CD8-positive, alpha-beta T cell (primary cell): ENCODE measurements at regions of chr16 and their contacts with region 1.

Region 1: DNA sequence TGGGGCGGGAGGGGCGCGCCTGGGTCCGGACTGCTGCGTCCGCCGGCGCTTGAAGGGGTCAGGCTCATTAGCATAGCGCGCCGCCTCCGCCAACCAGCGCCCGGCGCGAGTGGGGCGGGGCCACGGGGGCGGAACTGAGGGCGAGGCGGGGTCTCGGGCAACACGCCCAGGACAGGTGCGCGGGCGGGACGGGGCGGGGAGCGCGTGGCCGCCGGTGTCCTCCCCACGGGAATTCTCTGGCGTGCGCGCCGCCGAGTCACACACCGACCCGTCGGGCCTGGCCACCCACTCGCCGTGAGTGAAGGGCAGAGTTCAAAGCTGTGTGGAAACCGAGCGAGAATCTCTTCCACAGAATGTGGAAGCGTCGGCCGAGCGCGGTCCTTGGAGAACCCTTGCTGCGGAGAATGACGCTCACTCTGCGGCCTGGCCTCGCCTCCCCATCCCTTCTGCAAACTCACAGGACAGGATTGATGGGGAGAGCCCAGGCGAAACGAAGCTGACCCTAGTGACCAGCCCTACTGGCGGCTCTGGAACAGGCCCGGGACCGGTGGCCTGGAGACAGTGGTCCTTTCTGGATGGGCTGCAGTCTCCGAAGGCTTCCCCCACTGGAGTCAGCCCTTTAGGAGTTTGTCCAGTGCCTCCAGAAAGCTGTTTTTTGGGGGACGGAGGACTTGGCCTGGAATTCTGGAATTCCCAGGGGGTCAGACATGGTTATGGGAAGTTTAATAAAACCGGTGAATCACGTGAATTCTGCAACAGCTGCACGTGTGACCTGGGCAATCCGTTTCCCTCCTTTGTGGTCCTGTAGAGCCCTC is at the start of gene SNAI3:
- DNase-seq: peak; percentile 58 to 89 (median 85)
- ATAC-seq: peak; percentile 77
- H3K4me3 ChIP-seq: peak within 1 kb of the TSS; percentile 87 to 93
- H3K4me3 Mint-ChIP-seq: peak within 1 kb of the TSS; percentile 80
- H3K27ac ChIP-seq: peak within 1 kb of the TSS; percentile 59 to 63
- H3K27ac Mint-ChIP-seq: peak within 1 kb of the TSS; percentile 69
- H3K4me1 ChIP-seq: peaks cover 46% of the 10 kb centered on the region
- H3K4me1 Mint-ChIP-seq: peaks cover 50% of the 10 kb centered on the region
- H3K27me3 ChIP-seq: no peaks in the 10 kb centered on the region
- H3K27me3 Mint-ChIP-seq: no peaks in the 10 kb centered on the region
- CTCF ChIP-seq: no peak
- total RNA-seq, gene SNAI3: 3.1 to 3.4 TPM

Region 2: DNA sequence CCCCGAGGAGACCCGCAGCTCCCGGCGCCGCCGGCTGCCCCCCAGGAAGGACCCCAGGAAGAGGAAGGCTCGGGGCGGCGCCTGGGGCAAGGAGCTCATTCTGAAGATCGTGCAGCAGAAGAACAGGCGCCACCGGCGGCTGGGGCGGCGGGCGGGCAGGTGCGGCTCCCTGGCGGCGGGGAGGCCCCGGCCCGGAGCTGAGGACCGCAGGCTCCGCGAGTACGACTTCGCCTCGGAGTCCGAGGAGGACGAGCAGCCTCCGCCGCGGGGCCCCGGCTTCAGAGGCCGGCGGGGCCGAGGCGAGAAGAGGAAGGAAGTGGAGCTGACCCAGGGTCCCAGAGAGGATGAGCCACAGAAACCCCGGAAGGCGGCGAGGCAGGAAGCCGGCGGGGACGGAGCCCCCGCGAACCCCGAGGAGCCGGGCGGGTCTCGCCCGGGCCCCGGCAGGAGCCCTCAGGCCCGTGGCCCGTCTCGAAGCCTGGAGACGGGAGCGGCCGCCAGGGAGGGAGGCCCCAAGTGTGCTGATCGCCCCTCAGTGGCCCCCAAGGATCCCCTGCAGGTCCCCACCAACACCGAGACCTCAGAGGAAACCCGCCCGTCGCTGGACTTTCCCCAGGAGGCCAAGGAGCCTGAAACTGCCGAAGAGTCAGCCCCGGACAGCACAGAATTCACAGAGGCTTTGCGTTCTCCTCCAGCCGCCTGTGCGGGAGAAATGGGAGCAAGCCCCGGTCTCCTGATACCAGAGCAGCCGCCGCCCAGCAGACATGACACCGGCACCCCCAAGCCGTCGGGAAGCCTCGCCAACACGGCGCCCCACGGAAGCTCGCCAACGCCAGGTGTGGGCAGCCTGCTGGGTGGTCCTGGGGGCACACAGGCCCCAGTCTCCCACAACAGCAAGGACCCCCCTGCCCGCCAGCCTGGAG is 255.9 kb before region 1 on chr16:
- CTCF ChIA-PET with region 1: no interaction called
- POLR2A ChIA-PET with region 1: no interaction called
- intact Hi-C with region 1: no loop called
- DNase-seq: peak in 8 of 9 experiments; percentile 25 to 78 (median 46)
- ATAC-seq: peak; percentile 67
- H3K4me3 ChIP-seq: peak overlapping the region; percentile 54 to 55
- H3K4me3 Mint-ChIP-seq: peak overlapping the region; percentile 72
- H3K27ac ChIP-seq: peak overlapping the region; percentile 42 to 43
- H3K27ac Mint-ChIP-seq: no peak overlapping the region
- H3K4me1 ChIP-seq: peaks cover 13% of the 10 kb centered on the region
- H3K4me1 Mint-ChIP-seq: peaks cover 6% of the 10 kb centered on the region
- H3K27me3 ChIP-seq: no peaks in the 10 kb centered on the region
- H3K27me3 Mint-ChIP-seq: no peaks in the 10 kb centered on the region
- CTCF ChIP-seq: no peak

Region 3: GRCh38 chr16:88619859-88620815 is 66.5 kb before region 1 on chr16:
- CTCF ChIA-PET with region 1: interaction called, 4 read pairs
- POLR2A ChIA-PET with region 1: no interaction called
- intact Hi-C with region 1: loop called in 1 of 2 experiments (anchors 1 kb)
- DNase-seq: peak; percentile 58 to 97 (median 76)
- ATAC-seq: peak; percentile 85
- H3K4me3 ChIP-seq: no peak overlapping the region
- H3K4me3 Mint-ChIP-seq: peak overlapping the region; percentile 36
- H3K27ac ChIP-seq: peak overlapping the region; percentile 69 to 89
- H3K27ac Mint-ChIP-seq: peak overlapping the region; percentile 99
- H3K4me1 ChIP-seq: peaks cover 28% of the 10 kb centered on the region
- H3K4me1 Mint-ChIP-seq: peaks cover 25% of the 10 kb centered on the region
- H3K27me3 ChIP-seq: no peaks in the 10 kb centered on the region
- H3K27me3 Mint-ChIP-seq: no peaks in the 10 kb centered on the region
- CTCF ChIP-seq: no peak

Region 4: GRCh38 chr16:88650749-88651275 is 35.8 kb before region 1 on chr16 and contains the start of gene CYBA:
- CTCF ChIA-PET with region 1: interaction called, 3 read pairs
- POLR2A ChIA-PET with region 1: interaction called, 4 read pairs
- intact Hi-C with region 1: loop called (anchors 1 to 5 kb)
- DNase-seq: peak; percentile 73 to 92 (median 82)
- ATAC-seq: peak; percentile 80
- H3K4me3 ChIP-seq: peak within 1 kb of the TSS; percentile 90 to 95
- H3K4me3 Mint-ChIP-seq: peak within 1 kb of the TSS; percentile 91
- H3K27ac ChIP-seq: peak within 1 kb of the TSS; percentile 91 to 94
- H3K27ac Mint-ChIP-seq: peak within 1 kb of the TSS; percentile 94
- H3K4me1 ChIP-seq: peaks cover 33% of the 10 kb centered on the region
- H3K4me1 Mint-ChIP-seq: peaks cover 21% of the 10 kb centered on the region
- H3K27me3 ChIP-seq: no peaks in the 10 kb centered on the region
- H3K27me3 Mint-ChIP-seq: no peaks in the 10 kb centered on the region
- CTCF ChIP-seq: no peak
- total RNA-seq, gene CYBA: 312 to 320 TPM

Region 5: GRCh38 chr16:88700636-88701482 is 14.2 kb after region 1 on chr16:
- CTCF ChIA-PET with region 1: interaction called, 54 read pairs
- POLR2A ChIA-PET with region 1: interaction called, 15 read pairs
- intact Hi-C with region 1: loop called (anchors 1 kb)
- DNase-seq: peak; percentile 92 to 98 (median 97)
- ATAC-seq: peak; percentile 65
- H3K4me3 ChIP-seq: peak overlapping the region; percentile 74 to 95
- H3K4me3 Mint-ChIP-seq: peak overlapping the region; percentile 90
- H3K27ac ChIP-seq: peak overlapping the region; percentile 83 to 91
- H3K27ac Mint-ChIP-seq: peak overlapping the region; percentile 98
- H3K4me1 ChIP-seq: peaks cover 56% of the 10 kb centered on the region
- H3K4me1 Mint-ChIP-seq: peaks cover 61% of the 10 kb centered on the region
- H3K27me3 ChIP-seq: no peaks in the 10 kb centered on the region
- H3K27me3 Mint-ChIP-seq: no peaks in the 10 kb centered on the region
- CTCF ChIP-seq: no peak

Region 6: GRCh38 chr16:88785106-88785924 is 98.7 kb after region 1 on chr16 and contains the start of gene PIEZO1:
- CTCF ChIA-PET with region 1: interaction called, 3 read pairs
- POLR2A ChIA-PET with region 1: no interaction called
- intact Hi-C with region 1: loop called (anchors 2 to 5 kb)
- DNase-seq: peak; percentile 62 to 93 (median 84)
- ATAC-seq: peak; percentile 52
- H3K4me3 ChIP-seq: peak within 1 kb of the TSS; percentile 58 to 66
- H3K4me3 Mint-ChIP-seq: peak within 1 kb of the TSS; percentile 78
- H3K27ac ChIP-seq: peak within 1 kb of the TSS; percentile 40 to 85
- H3K27ac Mint-ChIP-seq: peak within 1 kb of the TSS; percentile 82
- H3K4me1 ChIP-seq: peaks cover 55% of the 10 kb centered on the region
- H3K4me1 Mint-ChIP-seq: peaks cover 43% of the 10 kb centered on the region
- H3K27me3 ChIP-seq: no peaks in the 10 kb centered on the region
- H3K27me3 Mint-ChIP-seq: no peaks in the 10 kb centered on the region
- CTCF ChIP-seq: peak; percentile 94
- total RNA-seq, gene PIEZO1: 67.4 to 70.1 TPM

Region 7: GRCh38 chr16:89201439-89202377 is 515.1 kb after region 1 on chr16:
- CTCF ChIA-PET with region 1: no interaction called
- POLR2A ChIA-PET with region 1: no interaction called
- intact Hi-C with region 1: no loop called
- DNase-seq: peak; percentile 55 to 84 (median 73)
- ATAC-seq: peak; percentile 93
- H3K4me3 ChIP-seq: peak overlapping the region in 1 of 2 experiments; percentile 6
- H3K4me3 Mint-ChIP-seq: peak overlapping the region; percentile 55
- H3K27ac ChIP-seq: no peak overlapping the region
- H3K27ac Mint-ChIP-seq: no peak overlapping the region
- H3K4me1 ChIP-seq: peaks cover 7% of the 10 kb centered on the region
- H3K4me1 Mint-ChIP-seq: peaks cover 14% of the 10 kb centered on the region
- H3K27me3 ChIP-seq: peaks cover 11 to 24% of the 10 kb centered on the region in 2 experiments
- H3K27me3 Mint-ChIP-seq: peaks cover 51% of the 10 kb centered on the region
- CTCF ChIP-seq: no peak